ENCODE measurements at regions of chr5 and their contacts with region 1.

Region 1: GRCh38 chr5:59745422-59745863 is 148.1 kb downstream of the PDE4D start:
- DNase-seq: no peak
- H3K4me3 ChIP-seq: no peak overlapping the region
- H3K27ac ChIP-seq: peak overlapping the region; percentile 75
- H3K4me1 ChIP-seq: peaks cover 28% of the 10 kb centered on the region
- H3K27me3 ChIP-seq: no peaks in the 10 kb centered on the region
- CTCF ChIP-seq: no peak
- POLR2A ChIP-seq: no peak

Region 2: GRCh38 chr5:59698207-59699178 is 47.0 kb before region 1 on chr5:
- CTCF ChIA-PET with region 1: no interaction called
- POLR2A ChIA-PET with region 1: no interaction called
- dilution Hi-C with region 1: no loop called
- intact Hi-C with region 1: no loop called
- DNase-seq: no peak
- H3K4me3 ChIP-seq: no peak overlapping the region
- H3K27ac ChIP-seq: no peak overlapping the region
- H3K4me1 ChIP-seq: no peaks in the 10 kb centered on the region
- H3K27me3 ChIP-seq: no peaks in the 10 kb centered on the region
- CTCF ChIP-seq: no peak
- POLR2A ChIP-seq: no peak

Region 3: GRCh38 chr5:59732301-59732700 is 13.1 kb before region 1 on chr5:
- CTCF ChIA-PET with region 1: interaction called, 11 read pairs
- POLR2A ChIA-PET with region 1: no interaction called
- dilution Hi-C with region 1: no loop called
- intact Hi-C with region 1: no loop called
- DNase-seq: peak; percentile 48
- H3K4me3 ChIP-seq: no peak overlapping the region
- H3K27ac ChIP-seq: no peak overlapping the region
- H3K4me1 ChIP-seq: peaks cover 5% of the 10 kb centered on the region
- H3K27me3 ChIP-seq: no peaks in the 10 kb centered on the region
- CTCF ChIP-seq: no peak
- POLR2A ChIP-seq: no peak

Region 4: DNA sequence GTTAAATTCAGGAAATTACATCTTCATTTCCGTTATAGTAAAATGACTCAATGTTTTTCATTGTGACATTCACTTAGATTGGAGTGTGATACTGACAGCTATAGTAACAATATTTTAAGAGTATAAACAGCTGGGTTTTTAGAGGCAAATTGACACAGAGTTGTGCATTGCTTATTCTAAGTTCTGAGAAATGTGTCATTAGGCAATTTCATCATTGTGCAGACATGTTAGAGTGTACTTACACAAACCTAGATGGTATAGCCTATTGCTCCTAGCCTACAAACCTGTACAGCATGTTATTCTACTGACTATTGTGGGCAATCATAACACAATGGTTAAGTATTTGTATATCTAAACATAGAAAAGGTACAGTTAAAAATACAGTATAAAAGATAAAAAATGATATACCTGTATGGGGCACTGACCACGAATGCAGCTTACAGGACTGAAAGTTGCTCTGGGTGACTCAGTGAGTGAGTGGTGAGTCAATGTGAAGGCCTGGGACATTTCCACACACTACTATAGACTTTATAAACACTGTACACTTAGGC is 15.4 kb after region 1 on chr5:
- CTCF ChIA-PET with region 1: interaction called, 5 read pairs
- POLR2A ChIA-PET with region 1: no interaction called
- dilution Hi-C with region 1: no loop called
- intact Hi-C with region 1: loop called (anchors 1 kb)
- DNase-seq: peak; percentile 88
- H3K4me3 ChIP-seq: peak overlapping the region in 1 of 3 experiments; percentile 48
- H3K27ac ChIP-seq: peak overlapping the region; percentile 98
- H3K4me1 ChIP-seq: peaks cover 62% of the 10 kb centered on the region
- H3K27me3 ChIP-seq: no peaks in the 10 kb centered on the region
- CTCF ChIP-seq: no peak
- POLR2A ChIP-seq: no peak

Region 5: DNA sequence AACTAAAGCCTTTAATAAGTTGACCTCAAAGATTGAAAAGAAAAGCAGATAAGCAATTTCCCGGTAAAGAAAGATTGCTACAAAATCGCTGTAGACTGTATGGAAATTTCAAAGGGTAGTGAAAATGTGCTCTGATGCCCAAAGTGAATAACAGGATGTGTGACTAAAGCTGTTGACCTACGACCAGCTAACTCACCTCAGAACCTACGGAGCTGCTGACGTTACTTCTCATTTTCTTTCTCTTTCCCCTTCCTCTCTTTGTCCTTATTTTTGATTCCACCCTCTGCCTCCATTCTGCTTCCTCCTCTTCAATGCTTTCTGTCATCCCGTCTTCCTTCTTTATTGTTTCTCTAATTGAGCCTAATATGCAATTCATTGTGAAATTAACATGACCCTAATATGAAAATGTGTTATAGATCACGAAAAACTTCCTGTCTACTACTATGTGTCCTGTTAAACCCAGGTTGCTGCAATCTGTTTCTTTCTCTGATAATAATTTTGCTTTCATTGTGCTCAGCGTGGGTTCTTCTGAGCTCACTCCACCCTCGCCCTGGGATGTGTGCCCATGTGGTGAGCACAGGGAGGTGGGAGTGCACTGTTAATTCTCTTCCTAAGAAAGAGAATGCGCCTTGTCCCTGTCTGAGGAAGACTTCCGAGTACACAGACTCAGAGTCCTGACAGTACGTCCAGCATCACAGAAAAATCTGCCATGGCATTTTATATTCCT is 45.1 kb after region 1 on chr5:
- CTCF ChIA-PET with region 1: interaction called, 3 read pairs
- POLR2A ChIA-PET with region 1: no interaction called
- dilution Hi-C with region 1: no loop called
- intact Hi-C with region 1: loop called (anchors 1 kb)
- DNase-seq: peak; percentile 92
- H3K4me3 ChIP-seq: peak overlapping the region in 2 of 3 experiments; percentile 6 to 44
- H3K27ac ChIP-seq: peak overlapping the region; percentile 94
- H3K4me1 ChIP-seq: peaks cover 34% of the 10 kb centered on the region
- H3K27me3 ChIP-seq: no peaks in the 10 kb centered on the region
- CTCF ChIP-seq: no peak
- POLR2A ChIP-seq: peak; percentile 76

Measured in endothelial cell of umbilical vein (primary cell).